Activated CD4-positive, alpha-beta T cell treated with anti-CD3 and anti-CD28 coated beads for 36 hours (primary cell): ENCODE measurements at regions of chr10 and their contacts with region 1.

Region 1: GRCh38 chr10:103265717-103266329 is 11.1 kb upstream of the INA start:
- DNase-seq: peak; percentile 71
- ATAC-seq: no peak
- H3K4me3 Mint-ChIP-seq: no peak overlapping the region
- H3K27ac Mint-ChIP-seq: no peak overlapping the region
- H3K4me1 Mint-ChIP-seq: peaks cover 4% of the 10 kb centered on the region
- H3K27me3 Mint-ChIP-seq: peaks cover 34% of the 10 kb centered on the region

Region 2: DNA sequence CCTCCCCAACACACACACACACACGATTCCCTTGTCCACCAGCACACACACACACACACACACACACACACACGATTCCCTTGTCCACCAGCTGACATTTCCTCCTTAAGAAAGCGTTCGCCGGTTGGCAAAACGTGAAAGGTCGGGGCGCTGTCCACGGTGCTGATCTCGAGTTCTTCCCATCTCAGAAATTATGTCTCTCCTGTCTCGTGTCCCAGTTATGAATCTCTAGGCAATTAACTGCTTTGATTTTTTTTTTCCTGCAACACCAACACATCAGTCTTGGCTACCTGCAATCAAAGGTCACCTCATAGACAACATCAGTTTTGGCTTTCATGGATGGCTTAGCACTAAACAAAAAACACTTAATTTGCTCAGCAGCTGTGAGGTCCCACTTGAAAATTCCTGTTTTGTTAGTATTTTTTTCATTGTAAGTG is 13.1 kb after region 1 on chr10:
- CTCF ChIA-PET with region 1: interaction called, 3 read pairs
- POLR2A ChIA-PET with region 1: no interaction called
- intact Hi-C with region 1: loop called in 1 of 2 experiments (anchors 1 kb)
- DNase-seq: peak; percentile 76
- ATAC-seq: no peak
- H3K4me3 Mint-ChIP-seq: no peak overlapping the region
- H3K27ac Mint-ChIP-seq: no peak overlapping the region
- H3K4me1 Mint-ChIP-seq: peaks cover 8% of the 10 kb centered on the region
- H3K27me3 Mint-ChIP-seq: peaks cover 65% of the 10 kb centered on the region